ENCODE measurements at regions of chr1 and their contacts with region 1.

Region 1: DNA sequence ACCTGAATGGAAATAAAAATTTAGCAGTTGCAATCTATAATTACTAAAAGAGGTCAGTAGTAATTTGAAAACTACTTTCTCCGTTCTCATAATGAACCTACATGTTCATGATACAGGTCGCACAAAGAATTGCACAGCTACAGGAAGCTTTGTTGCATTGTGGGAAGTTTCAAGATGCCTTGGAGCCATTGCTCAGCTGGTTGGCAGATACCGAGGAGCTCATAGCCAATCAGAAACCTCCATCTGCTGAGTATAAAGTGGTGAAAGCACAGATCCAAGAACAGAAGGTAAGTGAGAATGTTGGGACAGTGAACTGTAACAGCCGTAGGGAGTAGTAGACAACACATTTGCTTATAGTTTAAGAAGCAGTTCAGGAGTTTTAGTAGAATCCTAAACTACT is 68.8 kb upstream of the BMP8A start:
- DNase-seq: no peak
- ATAC-seq: no peak
- H3K4me3 ChIP-seq: no peak overlapping the region
- H3K27ac ChIP-seq: no peak overlapping the region
- H3K4me1 ChIP-seq: peaks cover 3% of the 10 kb centered on the region
- H3K27me3 ChIP-seq: no peaks in the 10 kb centered on the region

Region 2: GRCh38 chr1:39378377-39378776 is 44.2 kb before region 1 on chr1:
- intact Hi-C with region 1: loop called in 1 of 4 experiments (anchors 10 kb)
- DNase-seq: no peak
- ATAC-seq: peak in 1 of 2 donors; percentile 24
- H3K4me3 ChIP-seq: no peak overlapping the region
- H3K27ac ChIP-seq: no peak overlapping the region
- H3K4me1 ChIP-seq: peaks cover 1% of the 10 kb centered on the region
- H3K27me3 ChIP-seq: no peaks in the 10 kb centered on the region

Region 3: GRCh38 chr1:39525366-39526165 is 103.0 kb after region 1 on chr1:
- intact Hi-C with region 1: no loop called
- DNase-seq: no peak
- ATAC-seq: peak; percentile 29 to 53
- H3K4me3 ChIP-seq: no peak overlapping the region
- H3K27ac ChIP-seq: peak overlapping the region; percentile 72
- H3K4me1 ChIP-seq: no peaks in the 10 kb centered on the region
- H3K27me3 ChIP-seq: no peaks in the 10 kb centered on the region